ENCODE measurements at regions of chr12 and their contacts with region 1.

Region 1: DNA sequence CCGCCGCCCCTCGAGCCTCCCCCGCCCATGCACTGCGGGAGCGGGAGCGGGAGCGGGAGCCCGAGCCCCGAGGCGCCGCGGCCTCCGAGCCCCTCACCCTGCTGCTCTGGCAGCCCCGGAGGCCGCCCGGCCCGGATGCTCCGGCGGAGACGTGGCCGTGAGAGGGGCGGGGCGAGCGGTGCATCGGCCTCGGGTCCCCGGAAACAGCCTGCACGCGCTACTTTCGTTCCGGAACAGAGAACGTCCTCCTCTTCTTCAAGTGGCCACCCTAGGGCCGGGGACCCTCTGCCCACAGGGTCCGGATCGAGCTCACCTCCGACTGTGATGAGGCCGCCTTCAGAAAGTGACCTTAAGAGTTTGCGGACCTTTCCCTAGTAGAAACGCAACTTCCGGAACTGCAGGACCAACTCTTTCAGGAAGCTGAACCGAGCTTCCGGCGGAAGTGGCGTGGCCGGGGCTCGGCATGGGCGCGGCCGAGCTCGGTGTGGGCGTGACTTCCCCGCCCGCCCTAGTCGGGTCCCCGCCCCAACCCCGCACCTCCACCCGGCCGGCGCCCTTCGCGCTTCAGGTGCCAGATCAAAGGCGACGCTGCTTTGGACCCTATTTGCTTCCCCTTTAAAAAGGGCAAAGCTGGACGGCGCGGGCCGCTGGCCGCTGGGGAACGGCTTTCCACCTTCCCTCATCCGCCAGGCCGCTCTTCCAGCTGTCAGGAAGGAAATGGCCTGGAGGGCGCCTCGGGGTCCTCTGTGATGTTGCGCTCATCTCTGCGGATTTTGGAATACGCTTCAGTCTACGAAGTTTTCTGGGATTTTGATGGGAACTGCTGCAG is at the start of gene GOLGA3:
- DNase-seq: peak; percentile 91 to 98 (median 95)
- ATAC-seq: peak; percentile 91
- H3K4me3 ChIP-seq: peak within 1 kb of the TSS; percentile 90
- H3K4me3 Mint-ChIP-seq: peak within 1 kb of the TSS; percentile 99
- H3K27ac ChIP-seq: peak within 1 kb of the TSS; percentile 94 to 100
- H3K27ac Mint-ChIP-seq: peak within 1 kb of the TSS; percentile 100
- H3K4me1 ChIP-seq: peaks cover 37% of the 10 kb centered on the region
- H3K4me1 Mint-ChIP-seq: peaks cover 58% of the 10 kb centered on the region
- H3K27me3 ChIP-seq: no peaks in the 10 kb centered on the region
- H3K27me3 Mint-ChIP-seq: no peaks in the 10 kb centered on the region
- CTCF ChIP-seq: no peak
- total RNA-seq, gene GOLGA3: 31.5 to 34.0 TPM

Region 2: DNA sequence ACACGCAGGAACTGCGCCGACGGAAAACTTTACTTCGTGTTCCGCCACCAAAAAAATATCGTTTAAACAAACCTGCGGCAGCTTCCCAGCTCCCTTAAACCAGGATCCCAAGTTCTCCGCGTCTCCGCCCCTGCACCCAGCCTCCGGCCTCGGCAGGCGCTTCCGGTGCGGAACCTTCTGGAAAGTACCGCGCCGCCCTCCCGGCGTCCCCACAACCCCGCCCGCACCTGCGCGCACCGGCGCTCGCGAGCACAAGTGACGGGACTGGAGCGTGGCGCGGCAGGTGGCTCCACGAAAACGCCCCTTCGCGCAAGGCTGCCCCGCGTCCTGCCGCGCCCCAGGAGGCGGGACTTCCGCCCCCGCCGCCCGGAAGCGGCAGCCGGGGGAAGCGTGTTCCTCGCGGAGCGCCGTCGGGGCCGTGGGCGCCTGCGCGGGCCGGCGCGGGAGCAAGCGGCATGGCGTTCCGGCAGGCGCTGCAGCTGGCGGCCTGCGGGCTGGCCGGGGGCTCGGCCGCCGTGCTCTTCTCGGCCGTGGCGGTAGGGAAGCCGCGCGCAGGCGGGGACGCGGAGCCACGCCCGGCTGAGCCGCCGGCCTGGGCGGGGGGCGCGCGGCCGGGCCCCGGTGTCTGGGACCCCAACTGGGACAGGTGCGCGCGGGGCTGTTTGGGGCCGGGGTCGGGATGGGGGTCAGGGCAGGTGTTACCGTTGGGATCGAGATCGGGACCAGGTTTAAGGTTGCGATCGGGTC is 118.3 kb before region 1 on chr12 and contains the start of gene PGAM5:
- CTCF ChIA-PET with region 1: no interaction called
- POLR2A ChIA-PET with region 1: interaction called, 6 read pairs
- intact Hi-C with region 1: loop called in 1 of 2 experiments (anchors 2 kb)
- DNase-seq: peak; percentile 83 to 99 (median 92)
- ATAC-seq: peak; percentile 97
- H3K4me3 ChIP-seq: peak within 1 kb of the TSS; percentile 81
- H3K4me3 Mint-ChIP-seq: peak within 1 kb of the TSS; percentile 93
- H3K27ac ChIP-seq: peak within 1 kb of the TSS; percentile 88 to 93
- H3K27ac Mint-ChIP-seq: peak within 1 kb of the TSS; percentile 92
- H3K4me1 ChIP-seq: peaks cover 34% of the 10 kb centered on the region
- H3K4me1 Mint-ChIP-seq: peaks cover 16% of the 10 kb centered on the region
- H3K27me3 ChIP-seq: no peaks in the 10 kb centered on the region
- H3K27me3 Mint-ChIP-seq: no peaks in the 10 kb centered on the region
- CTCF ChIP-seq: no peak
- total RNA-seq, gene PGAM5: 12.8 to 15.1 TPM

Region 3: GRCh38 chr12:132771126-132771838 is 57.6 kb before region 1 on chr12:
- CTCF ChIA-PET with region 1: no interaction called
- POLR2A ChIA-PET with region 1: interaction called, 3 read pairs
- intact Hi-C with region 1: loop called in 1 of 2 experiments (anchors 2 kb)
- DNase-seq: peak; percentile 28 to 86 (median 55)
- ATAC-seq: peak; percentile 88
- H3K4me3 ChIP-seq: peak overlapping the region; percentile 4
- H3K4me3 Mint-ChIP-seq: peak overlapping the region; percentile 82
- H3K27ac ChIP-seq: peak overlapping the region; percentile 60 to 62
- H3K27ac Mint-ChIP-seq: peak overlapping the region; percentile 95
- H3K4me1 ChIP-seq: peaks cover 67% of the 10 kb centered on the region
- H3K4me1 Mint-ChIP-seq: peaks cover 62% of the 10 kb centered on the region
- H3K27me3 ChIP-seq: no peaks in the 10 kb centered on the region
- H3K27me3 Mint-ChIP-seq: no peaks in the 10 kb centered on the region
- CTCF ChIP-seq: no peak

Region 4: DNA sequence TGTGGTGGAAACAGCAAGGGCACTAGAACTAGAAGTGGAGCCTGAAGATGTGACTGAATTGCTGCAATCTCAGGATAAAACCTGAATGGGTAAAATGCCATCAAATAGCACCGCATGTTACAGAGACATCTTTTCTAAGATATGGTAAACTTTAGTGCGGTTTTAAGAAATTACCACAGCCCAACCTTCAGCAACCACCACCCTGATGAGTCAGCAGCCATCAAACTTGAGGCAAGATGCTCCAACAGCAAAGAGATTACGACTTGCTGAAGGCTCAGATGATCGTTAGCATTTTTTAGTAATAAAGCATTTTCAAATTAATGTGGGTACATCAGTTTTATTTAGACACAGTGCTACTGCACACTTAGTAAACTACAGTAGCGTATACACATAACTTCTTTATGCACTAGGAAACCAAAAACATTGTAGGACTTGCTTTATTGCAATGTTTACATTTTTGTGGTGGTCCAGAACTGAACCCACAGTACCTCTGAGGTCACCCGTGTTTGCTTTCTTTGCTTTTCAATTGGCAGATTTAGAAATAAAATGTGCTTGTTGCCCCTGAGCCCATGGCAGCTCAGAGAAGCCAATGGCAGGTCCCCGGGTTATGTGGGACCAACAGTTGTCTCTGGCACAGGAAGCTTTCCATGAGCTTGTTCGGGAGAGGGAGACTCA is 16.2 kb before region 1 on chr12:
- CTCF ChIA-PET with region 1: no interaction called
- POLR2A ChIA-PET with region 1: no interaction called
- intact Hi-C with region 1: no loop called
- DNase-seq: peak in 3 of 14 experiments; percentile 28 to 41 (median 38)
- ATAC-seq: peak; percentile 44
- H3K4me3 ChIP-seq: no peak overlapping the region
- H3K4me3 Mint-ChIP-seq: no peak overlapping the region
- H3K27ac ChIP-seq: no peak overlapping the region
- H3K27ac Mint-ChIP-seq: peak overlapping the region; percentile 30
- H3K4me1 ChIP-seq: peaks cover 8% of the 10 kb centered on the region
- H3K4me1 Mint-ChIP-seq: peaks cover 14% of the 10 kb centered on the region
- H3K27me3 ChIP-seq: no peaks in the 10 kb centered on the region
- H3K27me3 Mint-ChIP-seq: no peaks in the 10 kb centered on the region
- CTCF ChIP-seq: no peak

Region 5: DNA sequence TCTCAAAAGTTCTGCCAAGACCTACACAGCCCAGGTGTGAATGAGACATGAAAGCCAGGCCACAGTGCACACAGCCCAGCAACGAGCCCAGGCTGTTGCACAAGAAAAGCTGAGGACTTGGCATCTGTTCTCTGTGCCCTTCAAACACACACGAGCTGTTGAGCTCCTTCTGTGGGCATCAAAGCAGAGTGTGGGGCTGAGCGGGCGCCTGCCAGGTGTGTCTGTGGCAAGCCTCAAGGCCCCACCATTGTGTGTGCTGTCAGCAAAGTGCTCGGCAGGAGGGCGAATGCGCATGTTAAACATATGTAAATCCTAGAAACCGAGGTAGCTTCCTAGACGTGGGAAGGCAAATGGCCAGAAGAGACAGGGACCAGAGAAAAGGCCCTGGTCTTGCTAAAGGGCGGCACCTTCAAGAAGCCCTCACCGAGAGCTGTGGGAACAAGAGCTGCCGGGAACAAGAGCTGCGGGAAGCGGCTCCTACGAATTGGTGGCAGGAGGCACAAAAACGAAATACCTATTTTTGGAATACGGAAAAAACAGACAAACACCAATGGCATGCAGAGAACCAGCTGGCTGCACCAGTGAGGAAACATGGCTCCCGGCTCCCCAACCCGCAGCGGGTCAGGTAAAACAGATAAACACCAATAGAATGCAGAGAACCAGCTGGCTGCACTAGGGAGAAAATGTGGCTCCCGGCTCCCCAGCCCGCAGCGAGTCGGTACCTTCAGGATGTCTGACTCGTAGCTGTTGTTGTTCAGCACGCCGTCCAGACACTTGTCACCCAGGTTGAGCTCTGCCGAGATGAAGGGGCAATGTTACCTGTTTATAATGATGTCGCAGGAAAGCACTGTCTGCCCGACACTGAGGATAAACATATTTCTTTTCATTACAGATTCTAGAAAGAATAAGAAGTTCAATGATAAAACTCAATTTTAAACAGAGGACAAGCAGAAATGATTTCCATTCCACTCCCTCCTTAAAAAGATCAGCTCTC is 18.7 kb after region 1 on chr12:
- CTCF ChIA-PET with region 1: no interaction called
- POLR2A ChIA-PET with region 1: interaction called, 12 read pairs
- intact Hi-C with region 1: no loop called
- DNase-seq: peak in 4 of 14 experiments; percentile 26 to 36 (median 32)
- ATAC-seq: peak; percentile 82
- H3K4me3 ChIP-seq: no peak overlapping the region
- H3K4me3 Mint-ChIP-seq: peak overlapping the region; percentile 20
- H3K27ac ChIP-seq: peak overlapping the region in 1 of 2 donors; percentile 44
- H3K27ac Mint-ChIP-seq: peak overlapping the region; percentile 87
- H3K4me1 ChIP-seq: no peaks in the 10 kb centered on the region
- H3K4me1 Mint-ChIP-seq: peaks cover 17% of the 10 kb centered on the region
- H3K27me3 ChIP-seq: no peaks in the 10 kb centered on the region
- H3K27me3 Mint-ChIP-seq: no peaks in the 10 kb centered on the region
- CTCF ChIP-seq: no peak

Region 6: DNA sequence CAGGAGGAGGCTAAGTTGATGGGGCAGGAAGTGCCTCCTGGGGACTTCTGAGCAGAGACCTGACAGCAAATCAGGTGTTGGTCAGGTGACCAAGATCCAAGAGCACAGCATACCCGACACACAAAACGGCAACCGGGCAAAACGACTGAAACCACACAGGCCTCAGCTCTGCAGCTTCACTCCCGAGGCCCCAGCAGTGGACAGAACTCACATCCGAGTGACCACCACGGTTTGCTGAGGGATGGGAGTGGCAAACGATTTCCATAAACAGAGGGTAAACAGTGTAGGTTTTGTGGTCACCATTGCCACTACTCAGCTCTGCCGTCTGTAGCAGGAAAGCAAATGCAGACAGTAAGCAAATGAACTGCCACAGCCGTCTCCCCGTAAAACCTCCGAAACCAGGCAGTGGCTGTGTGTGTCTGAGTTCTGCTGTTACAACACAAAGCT is 44.1 kb after region 1 on chr12:
- CTCF ChIA-PET with region 1: no interaction called
- POLR2A ChIA-PET with region 1: interaction called, 12 read pairs
- intact Hi-C with region 1: loop called (anchors 5 kb)
- DNase-seq: peak in 10 of 14 experiments; percentile 2 to 57 (median 32)
- ATAC-seq: peak; percentile 77
- H3K4me3 ChIP-seq: peak overlapping the region; percentile 10
- H3K4me3 Mint-ChIP-seq: peak overlapping the region; percentile 71
- H3K27ac ChIP-seq: peak overlapping the region in 1 of 2 donors; percentile 57
- H3K27ac Mint-ChIP-seq: peak overlapping the region; percentile 93
- H3K4me1 ChIP-seq: peaks cover 21% of the 10 kb centered on the region
- H3K4me1 Mint-ChIP-seq: peaks cover 36% of the 10 kb centered on the region
- H3K27me3 ChIP-seq: no peaks in the 10 kb centered on the region
- H3K27me3 Mint-ChIP-seq: no peaks in the 10 kb centered on the region
- CTCF ChIP-seq: no peak

Region 7: DNA sequence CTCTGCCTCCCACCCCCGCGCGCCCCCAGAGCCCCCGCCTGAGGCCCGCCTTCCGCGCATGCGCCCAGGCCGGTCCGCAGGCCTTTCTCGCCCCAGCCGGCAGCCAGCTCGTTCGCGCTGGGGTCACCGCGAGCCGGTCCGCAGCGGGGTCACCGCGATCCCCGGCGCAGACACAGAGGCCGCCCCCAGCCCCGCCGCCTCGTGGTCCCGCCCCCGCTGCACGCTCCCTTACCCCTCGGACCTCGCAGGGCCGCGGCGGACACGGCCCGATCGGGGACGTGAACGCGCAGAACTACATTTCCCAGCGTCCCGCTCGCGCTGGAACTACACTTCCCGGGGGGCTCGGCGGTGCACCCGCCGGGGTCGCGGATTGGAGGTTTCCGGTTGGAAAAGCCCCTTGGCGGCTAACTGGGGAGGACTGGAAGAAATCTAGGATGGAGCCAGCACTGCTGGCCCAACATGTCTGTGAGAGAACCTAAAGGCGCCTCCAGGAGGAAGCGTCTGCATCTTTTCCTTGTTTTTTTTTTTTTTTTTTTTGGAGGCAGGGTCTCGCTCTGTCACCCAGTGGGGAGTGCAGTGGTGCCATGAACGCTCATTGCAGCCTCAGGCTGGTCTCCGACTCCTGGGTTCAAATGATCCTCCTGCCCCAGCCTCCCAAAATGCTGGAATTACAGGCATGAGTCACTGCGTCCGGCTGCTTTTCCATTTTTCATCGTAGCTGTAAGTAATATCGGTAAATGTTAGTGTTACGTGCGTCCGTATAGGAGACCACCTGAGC is 127.3 kb after region 1 on chr12 and contains the start of gene ZNF605:
- CTCF ChIA-PET with region 1: no interaction called
- POLR2A ChIA-PET with region 1: interaction called, 3 read pairs
- intact Hi-C with region 1: loop called in 1 of 2 experiments (anchors 5 kb)
- DNase-seq: peak; percentile 63 to 94 (median 79)
- ATAC-seq: peak; percentile 95
- H3K4me3 ChIP-seq: peak within 1 kb of the TSS; percentile 78
- H3K4me3 Mint-ChIP-seq: peak within 1 kb of the TSS; percentile 98
- H3K27ac ChIP-seq: peak within 1 kb of the TSS; percentile 33 to 64
- H3K27ac Mint-ChIP-seq: peak within 1 kb of the TSS; percentile 89
- H3K4me1 ChIP-seq: peaks cover 23% of the 10 kb centered on the region
- H3K4me1 Mint-ChIP-seq: peaks cover 29% of the 10 kb centered on the region
- H3K27me3 ChIP-seq: no peaks in the 10 kb centered on the region
- H3K27me3 Mint-ChIP-seq: no peaks in the 10 kb centered on the region
- CTCF ChIP-seq: no peak
- total RNA-seq, gene ZNF605: 5.3 to 5.8 TPM

Measured in CD4-positive, alpha-beta T cell (primary cell).